H1 (cell line): ENCODE measurements at regions of chr3 and their contacts with region 1.

Region 1: DNA sequence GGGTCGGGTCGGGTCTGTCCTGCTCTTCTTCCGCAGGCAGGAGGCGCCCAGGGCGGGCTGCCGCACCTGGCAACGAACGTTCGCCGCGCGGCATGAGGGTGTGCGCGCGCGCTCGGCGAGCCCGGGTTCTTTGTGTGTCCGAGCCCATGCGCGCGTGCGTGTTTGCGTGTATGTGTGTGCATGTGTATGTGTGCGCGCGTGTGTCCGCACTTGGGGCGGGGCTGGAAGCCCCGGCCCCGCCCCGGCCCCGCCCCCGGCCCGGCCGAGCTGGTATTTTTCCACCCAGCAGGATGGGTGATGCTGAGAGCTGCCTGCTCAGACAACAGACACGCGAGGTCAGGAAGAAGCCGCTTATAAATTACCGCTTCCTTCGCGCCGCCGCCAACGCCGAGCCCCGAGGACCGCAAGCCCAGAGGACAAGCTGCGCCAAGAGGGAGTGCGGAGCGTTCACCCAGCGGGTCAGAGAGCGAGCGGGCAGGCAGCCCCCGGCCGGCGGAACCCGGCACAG is at the start of gene SLC6A6:
- DNase-seq: peak; percentile 87 to 92
- H3K4me3 ChIP-seq: peak within 1 kb of the TSS; percentile 82 to 99 (median 98)
- H3K27ac ChIP-seq: peak within 1 kb of the TSS; percentile 90
- H3K4me1 ChIP-seq: peaks cover 5 to 25% (median 18%) of the 10 kb centered on the region in 4 experiments
- H3K27me3 ChIP-seq: no peaks in the 10 kb centered on the region
- CTCF ChIP-seq: peak in 2 of 3 experiments; percentile 68 to 70; a peak in 3 of 4 replicates
- EP300 ChIP-seq: no peak
- POLR2A ChIP-seq: peak in 1 of 2 experiments; percentile 93; a peak in 2 of 3 replicates
- RAD21 ChIP-seq: peak; percentile 59 to 65
- total RNA-seq, gene SLC6A6: 140 and 144 TPM in 2 replicates

Region 2: DNA sequence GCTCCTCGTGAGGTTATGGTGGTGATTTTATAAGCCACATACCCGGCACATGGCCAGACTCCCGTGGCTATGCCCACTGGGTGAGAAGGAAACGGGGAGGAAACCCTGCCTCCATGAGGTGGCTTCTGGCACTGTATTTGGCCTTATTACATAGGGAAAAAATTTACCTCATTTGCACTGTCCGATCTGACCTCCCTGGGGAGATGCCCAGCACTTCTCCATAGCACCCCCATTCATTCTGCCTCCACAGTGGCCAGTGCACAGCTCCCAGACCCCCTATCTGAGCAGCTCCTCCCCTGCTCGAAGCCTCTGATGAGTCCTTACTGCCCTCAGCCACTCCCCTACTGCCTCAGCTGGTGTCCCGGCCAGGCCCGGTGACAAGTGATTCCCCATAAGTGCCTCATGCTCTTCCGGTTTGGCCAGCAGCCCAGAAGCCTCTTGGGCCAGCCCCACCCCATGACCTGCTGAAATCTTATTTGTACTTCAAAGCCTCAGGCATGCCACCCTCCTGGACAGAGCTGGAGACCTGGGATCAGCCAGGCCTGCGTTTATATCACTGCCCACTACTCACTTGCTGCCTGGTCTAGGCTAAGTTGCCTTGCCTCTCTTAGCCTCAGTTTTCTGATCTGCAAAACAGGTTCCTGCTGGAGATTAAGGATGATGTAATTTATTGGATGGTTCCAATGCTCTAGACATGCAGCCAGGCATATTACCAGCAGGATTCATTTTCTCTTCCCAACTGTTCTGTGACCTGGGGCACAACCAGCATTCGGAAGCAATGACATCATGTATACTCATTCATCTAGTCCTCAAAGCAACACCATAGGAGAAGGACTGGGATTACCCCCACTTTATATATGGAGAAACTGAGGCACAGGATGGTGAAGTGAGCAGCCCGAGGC is 30.5 kb before region 1 on chr3:
- CTCF ChIA-PET with region 1: interaction called, 6 read pairs
- POLR2A ChIA-PET with region 1: interaction called, 10 read pairs
- DNase-seq: no peak
- H3K4me3 ChIP-seq: no peak overlapping the region
- H3K27ac ChIP-seq: no peak overlapping the region
- H3K4me1 ChIP-seq: peaks cover 2 to 21% (median 5%) of the 10 kb centered on the region in 4 experiments; a peak in 6 of 7 replicates
- H3K27me3 ChIP-seq: no peaks in the 10 kb centered on the region
- CTCF ChIP-seq: no peak
- EP300 ChIP-seq: no peak
- POLR2A ChIP-seq: no peak
- RAD21 ChIP-seq: no peak

Region 3: GRCh38 chr3:14391033-14391432 is 11.3 kb before region 1 on chr3:
- CTCF ChIA-PET with region 1: interaction called, 17 read pairs
- POLR2A ChIA-PET with region 1: interaction called, 41 read pairs
- DNase-seq: no peak
- H3K4me3 ChIP-seq: no peak overlapping the region
- H3K27ac ChIP-seq: no peak overlapping the region
- H3K4me1 ChIP-seq: peaks cover 0 to 5% (median 3%) of the 10 kb centered on the region in 4 experiments; a peak in 6 of 7 replicates
- H3K27me3 ChIP-seq: no peaks in the 10 kb centered on the region
- CTCF ChIP-seq: no peak
- EP300 ChIP-seq: no peak
- POLR2A ChIP-seq: no peak
- RAD21 ChIP-seq: no peak

Region 4: DNA sequence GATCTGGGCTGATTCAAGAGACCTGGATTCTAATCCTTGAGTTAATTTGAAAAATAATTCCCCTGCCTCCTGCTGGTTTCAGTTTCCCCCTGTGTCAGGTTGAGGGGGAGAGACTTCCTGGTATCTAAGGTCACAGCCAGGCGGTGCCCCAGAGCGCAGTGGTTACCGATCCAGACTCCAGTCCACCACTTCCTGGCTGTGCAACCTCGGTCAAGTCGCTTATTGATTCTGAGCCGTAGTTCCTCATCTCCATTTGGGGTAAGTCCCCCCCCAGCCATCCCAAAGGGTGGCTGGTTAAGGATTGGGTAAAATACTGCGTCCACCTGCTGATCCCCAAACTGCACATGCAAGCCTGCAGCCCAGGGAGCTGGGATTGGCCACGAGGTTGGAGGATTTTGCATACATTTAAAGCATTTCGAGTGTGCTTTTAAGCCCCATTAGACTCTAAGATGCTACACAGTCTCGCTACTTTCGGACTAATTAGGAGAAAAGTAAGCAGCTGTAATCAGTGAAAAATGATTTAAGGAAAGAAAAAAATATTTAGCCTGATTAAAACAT is 23.8 kb after region 1 on chr3:
- CTCF ChIA-PET with region 1: interaction called, 16 read pairs
- POLR2A ChIA-PET with region 1: interaction called, 17 read pairs
- DNase-seq: no peak
- H3K4me3 ChIP-seq: no peak overlapping the region
- H3K27ac ChIP-seq: no peak overlapping the region
- H3K4me1 ChIP-seq: peaks cover 20 to 44% (median 36%) of the 10 kb centered on the region in 4 experiments
- H3K27me3 ChIP-seq: no peaks in the 10 kb centered on the region
- CTCF ChIP-seq: no peak
- EP300 ChIP-seq: no peak
- POLR2A ChIP-seq: no peak
- RAD21 ChIP-seq: no peak

Region 5: DNA sequence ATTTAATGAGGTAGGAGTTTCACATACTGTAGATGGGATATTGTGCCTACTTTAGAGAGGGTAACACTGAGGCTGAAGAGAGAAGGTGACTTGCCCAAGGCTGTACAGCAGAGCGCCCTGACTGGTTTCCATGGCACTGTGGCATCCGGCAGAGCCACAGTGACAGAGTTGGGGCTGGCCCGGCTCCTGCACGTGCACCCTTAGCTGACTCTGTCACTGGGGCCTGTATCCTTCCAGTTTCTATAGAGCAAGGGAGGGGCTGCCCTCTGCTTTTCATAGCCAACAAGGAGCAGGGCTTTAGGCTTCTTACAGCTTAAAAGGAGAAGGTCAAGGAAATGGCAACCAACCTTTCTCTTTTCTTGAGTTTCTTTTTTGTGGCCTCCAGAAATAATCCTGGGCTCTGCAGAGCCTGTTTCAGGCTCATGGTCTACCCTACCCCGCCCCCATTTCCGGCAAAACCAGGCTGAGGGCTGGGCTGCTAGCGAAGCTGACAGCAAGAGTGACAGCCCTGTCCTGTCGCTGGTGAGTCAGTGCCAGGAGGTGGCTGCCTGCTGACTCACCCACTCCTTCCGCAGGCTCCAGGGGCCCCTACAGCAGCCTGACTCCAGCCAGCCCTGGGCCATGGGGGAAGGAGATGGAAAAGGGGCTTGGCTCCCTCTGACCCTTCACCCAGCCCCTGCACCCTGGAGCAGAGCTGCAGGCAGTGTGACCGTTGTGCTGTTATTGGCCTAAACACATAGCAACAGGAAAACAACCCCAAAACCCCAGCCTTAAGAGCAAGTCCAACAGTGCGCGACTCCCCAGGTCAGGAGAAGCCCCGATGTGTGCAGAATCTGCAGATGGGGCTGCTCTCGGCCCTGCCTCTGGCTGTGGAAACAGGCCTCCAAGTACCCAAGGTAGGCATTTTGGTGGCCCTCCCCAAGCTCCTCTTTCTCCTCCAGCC is 29.8 kb after region 1 on chr3:
- CTCF ChIA-PET with region 1: interaction called, 16 read pairs
- POLR2A ChIA-PET with region 1: interaction called, 8 read pairs
- DNase-seq: no peak
- H3K4me3 ChIP-seq: no peak overlapping the region
- H3K27ac ChIP-seq: no peak overlapping the region; the same call in 1 of the 2 replicates
- H3K4me1 ChIP-seq: peaks cover 0 to 18% (median 5%) of the 10 kb centered on the region in 4 experiments; a peak in 5 of 7 replicates
- H3K27me3 ChIP-seq: no peaks in the 10 kb centered on the region
- CTCF ChIP-seq: no peak
- EP300 ChIP-seq: no peak
- POLR2A ChIP-seq: no peak
- RAD21 ChIP-seq: no peak

Region 6: DNA sequence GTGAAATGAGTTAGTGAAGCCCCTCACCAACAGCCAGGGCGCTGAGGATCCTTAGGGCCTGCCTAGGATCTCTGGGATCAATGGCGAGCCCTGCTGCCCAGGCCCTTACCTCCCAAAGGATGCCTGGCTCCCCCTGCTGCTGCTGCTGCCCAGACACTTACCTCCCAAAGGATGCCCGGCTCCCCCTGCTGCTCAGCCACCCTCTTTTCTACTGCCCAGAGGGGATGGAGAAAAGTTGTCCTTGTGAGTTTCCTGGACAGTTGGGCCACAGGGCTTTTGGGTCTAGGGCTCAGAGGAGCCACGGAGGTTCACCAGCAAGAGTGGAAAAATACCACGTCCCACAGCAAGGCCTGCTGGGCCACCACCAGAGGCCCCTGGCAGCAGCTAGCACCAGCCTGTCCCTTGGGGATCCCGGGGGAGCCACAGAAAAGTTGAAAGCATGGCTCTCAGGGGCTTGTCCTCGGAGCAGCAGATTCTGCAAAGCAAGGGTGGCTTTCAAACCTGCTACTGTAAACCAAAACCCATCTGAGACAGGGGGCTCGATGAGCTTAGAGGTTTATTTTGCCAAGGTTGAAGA is 59.5 kb after region 1 on chr3:
- CTCF ChIA-PET with region 1: interaction called, 16 read pairs
- POLR2A ChIA-PET with region 1: interaction called, 25 read pairs
- DNase-seq: no peak
- H3K4me3 ChIP-seq: no peak overlapping the region
- H3K27ac ChIP-seq: no peak overlapping the region
- H3K4me1 ChIP-seq: peaks cover 0 to 8% (median 5%) of the 10 kb centered on the region in 4 experiments; a peak in 6 of 7 replicates
- H3K27me3 ChIP-seq: no peaks in the 10 kb centered on the region
- CTCF ChIP-seq: peak in 2 of 3 experiments; percentile 77 to 99; a peak in 3 of 4 replicates
- EP300 ChIP-seq: no peak
- POLR2A ChIP-seq: no peak
- RAD21 ChIP-seq: peak; percentile 79 to 83